Activated CD4-positive, alpha-beta T cell treated with anti-CD3 and anti-CD28 coated beads for 36 hours (primary cell): ENCODE measurements at regions of chr15 and their contacts with region 1.

Region 1: GRCh38 chr15:50354838-50355618 is at the start of gene GABPB1:
- DNase-seq: peak; percentile 94
- ATAC-seq: peak; percentile 42
- H3K4me3 Mint-ChIP-seq: peak within 1 kb of the TSS; percentile 99
- H3K27ac Mint-ChIP-seq: peak within 1 kb of the TSS; percentile 100
- H3K4me1 Mint-ChIP-seq: peaks cover 44% of the 10 kb centered on the region
- H3K27me3 Mint-ChIP-seq: no peaks in the 10 kb centered on the region
- total RNA-seq, gene GABPB1: 46.3 to 53.4 TPM

Region 2: GRCh38 chr15:48877630-48878595 is 1477.1 kb before region 1 on chr15 and contains the start of gene EID1:
- CTCF ChIA-PET with region 1: no interaction called
- POLR2A ChIA-PET with region 1: interaction called, 3 read pairs
- intact Hi-C with region 1: loop called in 1 of 2 experiments (anchors 10 kb)
- DNase-seq: peak; percentile 96
- ATAC-seq: peak; percentile 91
- H3K4me3 Mint-ChIP-seq: peak within 1 kb of the TSS; percentile 98
- H3K27ac Mint-ChIP-seq: peak within 1 kb of the TSS; percentile 99
- H3K4me1 Mint-ChIP-seq: peaks cover 45% of the 10 kb centered on the region
- H3K27me3 Mint-ChIP-seq: peaks cover 7% of the 10 kb centered on the region
- total RNA-seq, gene EID1: 73.6 to 82.5 TPM

Region 3: GRCh38 chr15:50182219-50183013 is 172.6 kb before region 1 on chr15:
- CTCF ChIA-PET with region 1: no interaction called
- POLR2A ChIA-PET with region 1: interaction called, 7 read pairs
- intact Hi-C with region 1: loop called (anchors 1 to 5 kb)
- DNase-seq: peak; percentile 73
- ATAC-seq: peak; percentile 68
- H3K4me3 Mint-ChIP-seq: peak overlapping the region; percentile 85
- H3K27ac Mint-ChIP-seq: peak overlapping the region; percentile 88
- H3K4me1 Mint-ChIP-seq: peaks cover 21% of the 10 kb centered on the region
- H3K27me3 Mint-ChIP-seq: peaks cover 27% of the 10 kb centered on the region

Region 4: DNA sequence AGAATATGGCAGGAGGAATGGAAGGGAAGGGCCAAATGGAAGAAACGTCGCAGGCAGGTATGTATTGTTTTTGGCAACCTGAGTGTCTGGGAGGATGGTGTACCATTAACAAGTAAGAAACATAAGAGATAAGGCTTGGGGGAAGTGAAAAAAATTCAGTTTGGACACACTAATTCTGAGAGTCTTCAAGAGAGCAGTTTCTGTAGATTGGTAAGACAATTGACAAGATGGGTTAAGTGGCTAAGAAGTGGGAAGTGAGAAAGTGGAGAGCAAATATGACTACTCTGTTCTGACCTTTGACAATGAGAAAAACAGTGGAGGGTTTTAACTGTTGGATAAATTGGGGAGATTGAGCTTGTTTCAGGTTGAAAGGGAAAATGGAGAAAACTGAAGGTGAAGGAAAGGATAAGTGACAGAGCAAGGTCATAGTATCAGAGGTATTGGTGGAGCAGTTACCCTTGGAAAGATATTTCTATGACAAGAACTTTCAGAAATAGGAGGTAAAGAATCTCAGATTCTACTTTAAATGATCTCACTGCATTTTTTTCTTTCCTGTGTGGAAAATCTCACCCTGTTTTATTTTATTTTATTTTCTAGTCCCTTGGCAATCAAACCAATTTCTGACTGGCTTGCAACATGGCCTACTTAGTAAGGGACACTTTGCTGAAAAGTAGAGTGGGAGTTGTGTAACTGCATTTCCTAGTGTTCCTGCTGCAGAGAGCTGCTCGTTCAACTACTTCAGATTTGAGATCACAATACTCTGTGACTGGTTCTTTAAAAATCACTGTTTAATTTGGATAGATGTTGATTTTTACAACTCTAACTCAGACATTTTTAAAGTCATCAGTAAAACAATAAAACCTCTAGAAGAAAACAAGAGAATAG is 23.1 kb after region 1 on chr15:
- CTCF ChIA-PET with region 1: interaction called, 5 read pairs
- POLR2A ChIA-PET with region 1: interaction called, 8 read pairs
- intact Hi-C with region 1: loop called (anchors 1 kb)
- DNase-seq: no peak
- ATAC-seq: peak; percentile 96
- H3K4me3 Mint-ChIP-seq: no peak overlapping the region
- H3K27ac Mint-ChIP-seq: peak overlapping the region; percentile 77
- H3K4me1 Mint-ChIP-seq: peaks cover 19% of the 10 kb centered on the region
- H3K27me3 Mint-ChIP-seq: no peaks in the 10 kb centered on the region

Region 5: GRCh38 chr15:50562735-50563640 is 208.0 kb after region 1 on chr15:
- CTCF ChIA-PET with region 1: no interaction called
- POLR2A ChIA-PET with region 1: no interaction called
- intact Hi-C with region 1: loop called in 1 of 2 experiments (anchors 10 kb)
- DNase-seq: peak; percentile 34
- ATAC-seq: peak; percentile 75
- H3K4me3 Mint-ChIP-seq: no peak overlapping the region
- H3K27ac Mint-ChIP-seq: peak overlapping the region; percentile 79
- H3K4me1 Mint-ChIP-seq: peaks cover 16% of the 10 kb centered on the region
- H3K27me3 Mint-ChIP-seq: no peaks in the 10 kb centered on the region

Region 6: DNA sequence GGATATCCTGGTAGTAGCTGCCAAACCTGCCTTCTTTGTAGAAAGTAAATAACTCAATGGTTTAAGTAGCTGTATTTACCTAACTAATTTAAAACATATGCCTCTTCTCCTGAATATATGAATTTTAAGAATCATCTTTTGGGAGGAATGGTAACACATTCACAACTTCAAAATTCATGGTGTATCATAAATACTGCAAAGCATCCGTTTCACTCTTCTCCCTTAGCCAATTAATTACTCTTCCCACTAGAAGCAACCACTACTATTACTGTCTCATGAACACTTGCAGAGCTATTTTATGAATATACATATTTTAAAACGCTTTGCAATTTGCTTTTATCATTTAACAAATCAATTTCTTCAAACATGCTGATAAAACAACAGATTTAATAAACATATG is 250.4 kb after region 1 on chr15:
- CTCF ChIA-PET with region 1: no interaction called
- POLR2A ChIA-PET with region 1: no interaction called
- intact Hi-C with region 1: no loop called
- DNase-seq: no peak
- ATAC-seq: no peak
- H3K4me3 Mint-ChIP-seq: no peak overlapping the region
- H3K27ac Mint-ChIP-seq: no peak overlapping the region
- H3K4me1 Mint-ChIP-seq: no peaks in the 10 kb centered on the region
- H3K27me3 Mint-ChIP-seq: no peaks in the 10 kb centered on the region

Region 7: GRCh38 chr15:50876989-50877360 is 521.9 kb after region 1 on chr15:
- CTCF ChIA-PET with region 1: no interaction called
- POLR2A ChIA-PET with region 1: no interaction called
- intact Hi-C with region 1: loop called in 1 of 2 experiments (anchors 1 kb)
- DNase-seq: peak; percentile 79
- ATAC-seq: no peak
- H3K4me3 Mint-ChIP-seq: peak overlapping the region; percentile 51
- H3K27ac Mint-ChIP-seq: peak overlapping the region; percentile 62
- H3K4me1 Mint-ChIP-seq: peaks cover 50% of the 10 kb centered on the region
- H3K27me3 Mint-ChIP-seq: peaks cover 12% of the 10 kb centered on the region

Region 8: GRCh38 chr15:51011212-51011611 is 656.2 kb after region 1 on chr15:
- CTCF ChIA-PET with region 1: no interaction called
- POLR2A ChIA-PET with region 1: no interaction called
- intact Hi-C with region 1: no loop called
- DNase-seq: no peak
- ATAC-seq: no peak
- H3K4me3 Mint-ChIP-seq: no peak overlapping the region
- H3K27ac Mint-ChIP-seq: no peak overlapping the region
- H3K4me1 Mint-ChIP-seq: peaks cover 3% of the 10 kb centered on the region
- H3K27me3 Mint-ChIP-seq: no peaks in the 10 kb centered on the region